ENCODE measurements at regions of chr7 and their contacts with region 1.

Region 1: DNA sequence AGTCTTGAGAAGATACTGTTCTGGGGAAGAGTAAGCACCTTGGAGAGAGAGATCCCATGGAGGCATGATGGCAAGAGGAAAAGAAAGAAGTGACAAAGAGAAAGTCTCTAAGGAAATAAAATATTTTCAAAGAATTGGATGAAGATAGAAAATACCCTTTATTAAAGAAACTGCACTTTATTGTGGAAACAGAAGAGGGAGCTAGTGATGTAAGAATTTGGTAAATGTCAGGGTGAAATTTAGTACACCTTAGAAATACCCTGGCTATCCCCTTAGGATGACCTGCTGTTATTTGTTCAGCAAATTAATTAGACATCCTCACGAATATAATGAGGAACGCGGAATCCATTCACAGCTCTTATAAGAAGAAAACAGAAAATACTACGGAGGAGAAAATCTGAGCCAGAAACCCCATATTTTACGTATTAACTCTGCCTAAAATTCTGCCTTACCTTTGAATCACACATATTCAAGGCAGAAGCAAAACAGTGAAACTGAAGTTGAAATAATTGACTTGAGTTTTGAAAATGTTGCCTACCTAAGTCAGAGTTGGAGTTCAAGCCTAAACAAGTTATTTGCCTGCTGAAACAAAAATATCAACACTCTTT is 90.7 kb downstream of the TFPI2 start:
- DNase-seq: no peak
- H3K4me3 ChIP-seq: no peak overlapping the region
- H3K27ac ChIP-seq: no peak overlapping the region
- H3K4me1 ChIP-seq: no peaks in the 10 kb centered on the region
- H3K27me3 ChIP-seq: no peaks in the 10 kb centered on the region
- CTCF ChIP-seq: peak; percentile 31 to 49

Region 2: DNA sequence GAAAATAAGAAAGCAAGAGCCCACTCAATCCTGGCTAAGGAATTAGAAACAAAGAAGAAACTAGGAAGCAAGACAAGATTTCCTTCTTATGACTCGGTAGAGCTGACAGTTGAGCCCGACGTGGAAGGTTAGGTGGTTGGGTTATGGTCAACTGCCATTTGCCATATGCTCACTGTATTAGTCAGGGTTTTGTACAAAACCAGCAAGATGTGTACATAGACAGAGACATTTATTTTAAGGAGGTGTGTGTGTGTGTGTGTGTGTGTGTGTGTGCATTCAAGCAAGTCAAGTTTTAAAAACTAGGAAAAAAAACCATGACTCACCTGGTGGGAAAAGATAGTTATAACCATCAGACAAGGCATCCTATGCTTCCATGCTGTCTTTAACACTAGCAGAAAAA is 409.2 kb before region 1 on chr7:
- intact Hi-C with region 1: no loop called
- DNase-seq: no peak
- H3K4me3 ChIP-seq: no peak overlapping the region
- H3K27ac ChIP-seq: no peak overlapping the region
- H3K4me1 ChIP-seq: no peaks in the 10 kb centered on the region
- H3K27me3 ChIP-seq: no peaks in the 10 kb centered on the region
- CTCF ChIP-seq: no peak

Region 3: DNA sequence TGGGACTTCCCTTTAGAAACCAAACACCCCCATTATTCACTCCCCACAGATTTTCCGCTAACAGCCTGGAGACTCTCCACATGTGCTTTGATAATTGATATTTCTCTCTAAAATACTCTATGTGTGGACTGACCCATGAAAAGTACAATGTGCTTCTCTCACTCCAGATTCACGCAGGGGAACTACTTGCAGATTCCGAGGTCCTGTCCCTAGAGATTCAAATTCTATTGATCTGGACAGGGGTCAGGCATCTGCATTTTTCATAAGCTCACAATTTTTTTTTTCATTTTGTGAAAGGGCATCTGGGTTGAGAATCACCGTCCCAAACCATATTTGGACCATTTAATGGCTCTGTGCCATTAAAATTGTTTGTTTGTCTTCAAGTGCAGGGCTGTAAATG is 324.0 kb before region 1 on chr7:
- intact Hi-C with region 1: no loop called
- DNase-seq: no peak
- H3K4me3 ChIP-seq: no peak overlapping the region
- H3K27ac ChIP-seq: no peak overlapping the region
- H3K4me1 ChIP-seq: no peaks in the 10 kb centered on the region
- H3K27me3 ChIP-seq: no peaks in the 10 kb centered on the region
- CTCF ChIP-seq: no peak

Region 4: GRCh38 chr7:93601363-93601762 is 198.5 kb before region 1 on chr7:
- intact Hi-C with region 1: no loop called
- DNase-seq: no peak
- H3K4me3 ChIP-seq: no peak overlapping the region
- H3K27ac ChIP-seq: no peak overlapping the region
- H3K4me1 ChIP-seq: no peaks in the 10 kb centered on the region
- H3K27me3 ChIP-seq: no peaks in the 10 kb centered on the region
- CTCF ChIP-seq: no peak

Region 5: DNA sequence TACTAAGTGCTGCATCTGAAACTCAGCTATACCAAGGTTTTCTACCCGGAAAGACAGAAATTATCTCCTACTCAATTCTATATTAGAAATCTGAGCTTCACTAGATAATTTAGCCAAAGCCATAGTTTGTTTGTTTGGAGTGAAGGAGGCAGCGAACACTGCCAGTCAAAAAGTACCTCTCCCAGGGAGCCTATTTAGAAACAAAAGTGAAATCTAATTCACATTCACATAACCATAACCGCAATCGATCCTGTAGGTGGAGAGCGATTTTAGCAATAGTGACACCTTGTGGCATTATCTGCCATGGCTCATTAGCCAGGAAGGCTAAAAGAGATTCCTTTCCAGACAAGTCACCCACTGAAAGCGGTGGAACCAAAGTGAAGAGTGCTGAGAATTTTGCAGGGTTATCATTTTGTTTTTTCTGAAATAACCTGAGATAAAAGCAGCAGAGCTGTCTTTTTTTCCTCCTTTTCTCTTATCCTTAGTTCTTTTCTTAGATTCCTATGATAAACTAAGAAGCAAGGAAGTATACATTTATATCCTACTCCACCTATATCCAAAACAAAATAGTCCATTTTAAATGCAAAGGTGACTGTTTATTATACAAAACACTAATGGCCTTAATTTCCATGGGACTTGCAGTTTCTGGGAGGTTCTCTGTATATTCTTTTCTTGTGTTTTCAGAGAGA is 288.0 kb after region 1 on chr7:
- intact Hi-C with region 1: loop called (anchors 5 kb)
- DNase-seq: no peak
- H3K4me3 ChIP-seq: peak overlapping the region in 1 of 2 donors; percentile 9
- H3K27ac ChIP-seq: no peak overlapping the region
- H3K4me1 ChIP-seq: no peaks in the 10 kb centered on the region
- H3K27me3 ChIP-seq: no peaks in the 10 kb centered on the region
- CTCF ChIP-seq: peak; percentile 68 to 71

Measured in tibial artery (tissue), 4 donors.